ENCODE measurements at regions of chr12 and their contacts with region 1.

Region 1: GRCh38 chr12:106386813-106387535 is 29.4 kb downstream of the POLR3B start:
- DNase-seq: no peak
- H3K4me3 ChIP-seq: no peak overlapping the region
- H3K27ac ChIP-seq: no peak overlapping the region
- H3K4me1 ChIP-seq: no peaks in the 10 kb centered on the region
- H3K27me3 ChIP-seq: no peaks in the 10 kb centered on the region
- CTCF ChIP-seq: no peak
- POLR2A ChIP-seq: no peak

Region 2: DNA sequence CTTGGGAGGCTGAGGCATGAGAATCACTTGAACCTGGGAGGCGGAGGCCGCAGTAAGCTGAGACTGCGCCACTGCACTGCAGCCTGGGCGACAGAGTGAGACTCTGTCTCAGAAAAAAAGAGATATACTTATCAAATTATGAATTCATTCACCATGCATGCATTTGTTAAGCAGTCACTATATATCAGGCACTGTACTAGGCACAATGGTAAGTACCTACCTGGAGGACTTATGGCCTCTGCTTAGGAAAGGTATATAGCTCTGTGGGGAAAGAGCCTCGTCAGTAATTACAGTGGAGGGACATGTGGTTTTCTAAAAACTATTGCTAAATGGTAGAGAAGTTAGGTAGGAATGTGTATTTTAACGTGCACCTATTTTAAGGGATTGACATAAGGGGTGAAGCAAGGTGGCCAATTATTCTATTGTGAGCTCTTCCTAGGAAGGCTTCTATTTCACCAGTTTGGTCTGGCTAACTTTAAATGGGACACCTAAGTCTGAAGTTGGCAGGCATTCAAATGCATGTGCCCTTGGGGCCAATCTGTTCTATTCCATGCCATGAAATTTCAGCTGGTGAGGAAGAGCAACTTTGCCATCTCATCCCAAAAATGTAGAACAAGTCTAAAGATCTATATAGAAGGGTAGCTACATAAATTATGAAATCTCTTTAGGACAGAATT is 69.4 kb before region 1 on chr12:
- intact Hi-C with region 1: no loop called
- DNase-seq: no peak
- H3K4me3 ChIP-seq: no peak overlapping the region
- H3K27ac ChIP-seq: no peak overlapping the region
- H3K4me1 ChIP-seq: no peaks in the 10 kb centered on the region
- H3K27me3 ChIP-seq: no peaks in the 10 kb centered on the region
- CTCF ChIP-seq: no peak
- POLR2A ChIP-seq: no peak

Region 3: DNA sequence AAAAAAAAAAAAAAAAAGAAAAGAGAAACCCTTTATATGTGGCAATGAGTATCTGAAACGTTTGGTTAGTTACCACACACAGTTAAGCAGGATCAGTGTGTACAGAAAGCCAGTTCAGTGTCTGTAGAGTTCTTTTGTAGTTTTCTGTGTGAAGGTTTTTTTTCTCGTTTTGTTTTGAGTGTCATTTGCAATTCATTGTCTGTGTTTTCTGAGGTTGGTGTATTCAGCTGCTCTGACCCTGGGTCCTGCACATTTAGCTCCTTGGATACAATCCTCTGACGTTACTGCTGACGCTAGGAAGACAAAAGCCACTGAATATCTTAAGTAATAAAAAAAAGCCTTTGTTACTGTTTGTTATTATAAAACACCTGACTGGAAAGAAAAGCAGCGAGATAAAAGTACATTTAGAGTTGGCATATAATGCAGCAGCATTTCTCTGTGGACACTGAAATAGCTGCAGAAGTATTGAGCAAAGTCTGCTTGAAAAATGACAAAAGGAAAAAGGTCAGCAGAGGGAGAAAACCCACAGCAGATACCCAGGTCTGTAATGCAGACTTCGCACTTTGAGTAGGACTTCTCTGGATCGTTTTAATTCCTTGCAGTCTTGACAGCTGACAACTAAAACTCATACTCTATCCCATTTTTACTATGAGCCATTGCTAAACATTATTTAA is 59.6 kb after region 1 on chr12:
- intact Hi-C with region 1: no loop called
- DNase-seq: no peak
- H3K4me3 ChIP-seq: no peak overlapping the region
- H3K27ac ChIP-seq: no peak overlapping the region
- H3K4me1 ChIP-seq: no peaks in the 10 kb centered on the region
- H3K27me3 ChIP-seq: no peaks in the 10 kb centered on the region
- CTCF ChIP-seq: no peak
- POLR2A ChIP-seq: no peak

Region 4: GRCh38 chr12:106841510-106842302 is 454.7 kb after region 1 on chr12:
- intact Hi-C with region 1: loop called (anchors 5 kb)
- DNase-seq: peak; percentile 21
- H3K4me3 ChIP-seq: no peak overlapping the region
- H3K27ac ChIP-seq: no peak overlapping the region
- H3K4me1 ChIP-seq: no peaks in the 10 kb centered on the region
- H3K27me3 ChIP-seq: no peaks in the 10 kb centered on the region
- CTCF ChIP-seq: peak in 3 of 4 experiments; percentile 48 to 61 (median 50)
- POLR2A ChIP-seq: no peak

Region 5: GRCh38 chr12:106919910-106920544 is 533.1 kb after region 1 on chr12:
- intact Hi-C with region 1: loop called (anchors 2 kb)
- DNase-seq: peak; percentile 11
- H3K4me3 ChIP-seq: no peak overlapping the region
- H3K27ac ChIP-seq: no peak overlapping the region
- H3K4me1 ChIP-seq: no peaks in the 10 kb centered on the region
- H3K27me3 ChIP-seq: peaks cover 3% of the 10 kb centered on the region
- CTCF ChIP-seq: peak; percentile 71 to 82 (median 78)
- POLR2A ChIP-seq: no peak

Region 6: DNA sequence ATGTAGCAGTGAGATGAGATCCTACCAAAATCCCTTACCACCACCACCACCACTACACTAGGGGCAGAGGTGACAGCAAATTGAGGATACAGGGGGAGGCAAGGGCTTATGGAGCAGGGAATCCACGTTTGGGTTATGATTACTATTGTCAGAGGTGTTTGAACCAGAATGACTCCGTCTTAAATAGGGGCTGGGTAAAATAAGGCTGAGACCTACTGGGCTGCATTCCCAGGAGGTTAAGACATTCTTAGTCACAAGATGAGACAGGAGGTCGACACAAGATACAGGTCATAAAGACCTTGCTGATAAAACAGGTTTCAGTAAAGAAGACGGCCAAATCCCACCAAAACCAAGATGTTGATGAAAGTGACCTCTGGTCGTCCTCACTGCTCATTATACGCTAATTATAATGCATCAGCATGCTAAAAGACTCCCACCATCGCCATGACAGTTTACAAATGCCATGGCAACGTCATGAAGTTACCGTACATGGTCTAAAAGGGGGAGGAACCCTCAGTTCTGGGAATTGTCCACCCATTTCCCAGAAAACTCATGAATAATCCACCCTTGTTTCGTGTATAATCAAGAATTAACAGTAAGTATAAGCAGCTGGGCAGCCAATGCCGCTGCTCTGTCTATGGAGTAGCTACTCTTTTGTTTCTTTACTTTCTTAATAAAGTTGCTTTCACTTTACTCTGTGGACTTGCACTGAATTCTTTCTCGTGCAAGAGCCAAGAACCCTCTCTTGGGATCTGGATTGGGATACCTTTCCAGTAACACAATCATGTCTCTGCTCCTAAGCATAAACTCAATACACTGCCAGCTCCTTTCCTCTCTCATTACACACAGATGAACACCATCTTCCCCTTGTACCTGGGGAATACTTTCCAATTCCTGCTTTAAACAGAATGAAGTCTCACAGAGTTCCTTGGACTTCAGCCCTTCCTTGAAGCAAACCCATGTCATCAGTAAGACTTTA is 723.1 kb after region 1 on chr12:
- intact Hi-C with region 1: loop called (anchors 10 kb)
- DNase-seq: no peak
- H3K4me3 ChIP-seq: no peak overlapping the region
- H3K27ac ChIP-seq: no peak overlapping the region
- H3K4me1 ChIP-seq: no peaks in the 10 kb centered on the region
- H3K27me3 ChIP-seq: no peaks in the 10 kb centered on the region
- CTCF ChIP-seq: no peak
- POLR2A ChIP-seq: no peak